Posterior cingulate gyrus (tissue), 11 donors: ENCODE measurements at regions of chr3 and their contacts with region 1.

Region 1: DNA sequence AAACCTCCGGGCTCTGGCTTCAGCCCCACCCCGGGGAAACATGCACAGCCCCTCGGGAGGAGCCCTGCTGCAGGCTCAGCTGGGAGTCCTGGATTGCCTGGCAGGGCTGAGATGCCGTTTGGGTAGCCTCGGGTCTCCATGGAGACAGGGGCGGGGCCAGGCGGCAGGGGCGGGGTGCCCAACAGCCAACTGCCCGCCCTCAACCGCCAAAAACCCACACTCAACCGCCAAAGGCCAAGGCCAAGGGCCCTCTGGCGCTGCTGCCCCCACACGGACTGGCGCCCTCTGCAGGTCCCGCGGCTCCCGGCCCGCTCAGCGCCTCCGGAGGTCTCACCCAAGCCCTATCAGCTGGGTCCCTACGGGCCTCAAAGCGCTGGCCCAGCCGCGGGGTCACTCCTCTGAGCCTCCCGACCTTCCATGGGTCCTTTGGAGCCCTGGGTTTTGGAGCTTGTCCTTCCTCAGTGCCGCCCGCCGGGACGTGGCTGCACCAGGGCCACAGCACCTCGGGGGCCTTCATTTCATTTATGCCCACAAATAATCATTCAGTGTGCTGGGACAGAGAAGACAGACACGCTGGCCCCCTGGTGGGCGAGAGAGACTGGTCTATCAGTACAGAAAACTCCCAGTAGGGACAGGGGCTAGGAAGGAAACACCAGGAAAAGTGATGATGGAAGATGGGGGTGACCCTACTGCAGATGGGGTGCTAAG is 33.5 kb upstream of the ACAD9 start:
- DNase-seq: peak; percentile 68 to 97 (median 83)

Region 2: GRCh38 chr3:128725932-128726690 is 119.8 kb before region 1 on chr3 and contains the start of gene RAB7A:
- intact Hi-C with region 1: loop called (anchors 5 kb)
- DNase-seq: peak; percentile 96 to 99 (median 98)

Region 3: DNA sequence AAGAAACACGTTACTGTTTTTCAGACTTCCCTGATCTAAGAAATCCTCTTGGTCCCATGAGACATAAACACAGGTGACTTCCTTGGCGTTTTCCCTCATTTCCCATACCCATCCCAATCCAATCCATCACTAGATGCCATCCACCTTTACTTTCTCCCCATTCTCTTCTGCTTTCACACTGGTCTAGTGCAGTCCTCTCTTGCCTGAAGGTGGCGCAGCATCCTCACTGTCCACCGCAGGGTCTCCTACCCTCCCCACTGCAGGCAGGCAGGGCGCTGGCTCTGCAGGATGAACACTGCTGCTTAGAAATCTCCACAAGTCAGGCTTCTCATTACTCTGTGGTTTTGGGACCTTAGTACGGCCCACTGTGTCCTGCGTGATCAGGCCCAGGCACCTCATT is 61.7 kb before region 1 on chr3:
- intact Hi-C with region 1: loop called (anchors 1 kb)
- DNase-seq: peak; percentile 22 to 95 (median 63)

Region 4: GRCh38 chr3:128814519-128815317 is 31.2 kb before region 1 on chr3:
- intact Hi-C with region 1: no loop called
- DNase-seq: no peak